ENCODE measurements at regions of chr10 and their contacts with region 1.

Region 1: GRCh38 chr10:92880233-92880861 is 32.0 kb downstream of the EXOC6 start:
- DNase-seq: no peak
- H3K4me3 ChIP-seq: no peak overlapping the region
- H3K27ac ChIP-seq: no peak overlapping the region
- H3K4me1 ChIP-seq: no peaks in the 10 kb centered on the region
- H3K27me3 ChIP-seq: no peaks in the 10 kb centered on the region
- CTCF ChIP-seq: peak; percentile 22 to 60 (median 44)

Region 2: GRCh38 chr10:92517034-92517655 is 363.2 kb before region 1 on chr10:
- intact Hi-C with region 1: loop called (anchors 10 kb)
- DNase-seq: peak in 1 of 2 donors; percentile 77
- H3K4me3 ChIP-seq: no peak overlapping the region
- H3K27ac ChIP-seq: no peak overlapping the region
- H3K4me1 ChIP-seq: no peaks in the 10 kb centered on the region
- H3K27me3 ChIP-seq: no peaks in the 10 kb centered on the region
- CTCF ChIP-seq: peak; percentile 54 to 72 (median 55)

Region 3: DNA sequence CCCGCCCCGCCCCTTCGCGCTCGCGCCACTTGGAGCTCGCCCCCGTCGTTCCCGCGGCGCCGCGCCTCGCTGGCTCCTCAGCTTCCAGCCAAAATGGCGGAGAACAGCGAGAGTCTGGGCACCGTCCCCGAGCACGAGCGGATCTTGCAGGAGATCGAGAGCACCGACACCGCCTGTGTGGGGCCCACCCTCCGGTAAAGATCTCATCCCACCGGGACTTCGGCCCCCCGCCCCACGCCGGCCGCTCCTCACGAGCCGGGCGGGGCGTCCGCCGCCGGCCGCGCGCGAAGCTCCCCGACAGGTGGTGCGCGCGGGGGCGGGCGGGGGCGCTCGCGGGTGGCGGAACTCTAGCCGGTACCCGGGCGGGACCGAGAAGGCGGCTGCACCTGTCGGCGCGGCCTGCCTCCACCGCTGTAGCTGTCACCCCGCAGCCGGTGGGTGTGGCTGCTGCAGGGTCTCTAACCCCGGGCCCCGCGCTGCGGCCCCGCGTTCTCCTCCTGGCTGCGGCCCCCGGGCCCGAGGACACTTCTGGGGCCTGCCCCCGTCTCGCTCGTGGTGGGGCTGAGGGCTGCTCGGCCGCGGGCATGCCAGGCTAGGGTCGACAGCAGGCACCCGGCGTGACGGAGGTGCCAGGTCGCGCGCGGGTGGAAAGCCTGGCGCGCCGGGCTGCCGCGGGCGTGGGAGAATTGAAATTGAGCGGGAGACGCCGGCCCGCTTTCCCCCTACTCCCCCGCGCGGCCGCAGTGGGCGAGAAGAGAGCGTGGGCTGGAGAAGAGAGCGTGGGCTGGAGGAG is 31.7 kb before region 1 on chr10 and contains the start of gene EXOC6:
- intact Hi-C with region 1: loop called (anchors 1 kb)
- DNase-seq: peak in 1 of 2 donors; percentile 80
- H3K4me3 ChIP-seq: peak within 1 kb of the TSS; percentile 93 to 94
- H3K27ac ChIP-seq: peak within 1 kb of the TSS; percentile 52 to 85
- H3K4me1 ChIP-seq: peaks cover 0 to 6% of the 10 kb centered on the region in 2 donors
- H3K27me3 ChIP-seq: no peaks in the 10 kb centered on the region
- CTCF ChIP-seq: peak in 1 of 3 experiments; percentile 13
- total RNA-seq, gene EXOC6: 12.2 TPM